ENCODE measurements at regions of chr1 and their contacts with region 1.

Region 1: DNA sequence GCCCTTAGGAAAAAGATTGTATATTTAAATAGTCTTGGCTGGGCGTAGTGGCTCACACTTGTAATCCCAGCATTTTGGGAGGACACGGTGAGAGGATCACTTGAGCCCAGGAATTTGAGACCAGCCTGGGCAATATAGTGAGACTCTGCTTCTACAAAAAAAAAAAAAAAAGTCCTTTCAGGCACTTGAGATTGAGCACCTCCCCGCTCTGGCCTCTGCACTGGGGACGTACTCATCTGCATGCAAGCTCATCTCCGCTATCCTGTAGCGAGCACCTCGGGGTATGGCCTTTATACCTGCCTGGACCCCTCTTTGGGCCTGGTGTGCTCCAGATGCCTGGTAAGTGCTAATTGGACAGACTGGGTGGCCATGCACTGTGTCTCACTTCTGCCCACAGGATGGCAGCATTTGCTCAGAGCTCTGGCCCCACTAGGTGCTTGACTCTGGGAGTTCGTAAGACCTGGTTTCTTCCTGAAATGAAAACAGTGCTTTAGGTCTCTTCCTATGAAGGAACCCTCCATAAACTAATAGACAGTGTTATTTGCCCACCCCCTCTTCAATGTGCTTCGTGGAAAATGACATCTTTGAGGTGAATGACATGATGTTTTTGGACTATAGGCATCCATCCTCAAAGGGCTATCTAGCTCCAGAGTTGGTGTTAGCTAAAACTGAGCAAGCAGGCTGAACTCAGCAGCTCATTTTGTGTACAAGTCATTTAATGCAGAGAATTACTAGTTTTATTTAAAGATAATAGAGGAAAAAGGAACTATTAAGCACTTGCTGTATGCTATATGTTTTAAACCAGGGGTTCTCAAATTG is 61.7 kb upstream of the ADAR start:
- DNase-seq: peak; percentile 88
- H3K4me3 ChIP-seq: no peak overlapping the region
- H3K27ac ChIP-seq: no peak overlapping the region
- H3K4me1 ChIP-seq: peaks cover 0 to 7% (median 0%) of the 10 kb centered on the region in 6 donors
- H3K27me3 ChIP-seq: no peaks in the 10 kb centered on the region
- CTCF ChIP-seq: peak; percentile 64 to 88 (median 77)
- POLR2A ChIP-seq: no peak

Region 2: GRCh38 chr1:154474802-154475201 is 194.9 kb before region 1 on chr1:
- intact Hi-C with region 1: no loop called
- DNase-seq: no peak
- H3K4me3 ChIP-seq: no peak overlapping the region
- H3K27ac ChIP-seq: no peak overlapping the region
- H3K4me1 ChIP-seq: peaks cover 3 to 51% (median 16%) of the 10 kb centered on the region in 6 donors
- H3K27me3 ChIP-seq: no peaks in the 10 kb centered on the region
- CTCF ChIP-seq: no peak
- POLR2A ChIP-seq: no peak

Region 3: DNA sequence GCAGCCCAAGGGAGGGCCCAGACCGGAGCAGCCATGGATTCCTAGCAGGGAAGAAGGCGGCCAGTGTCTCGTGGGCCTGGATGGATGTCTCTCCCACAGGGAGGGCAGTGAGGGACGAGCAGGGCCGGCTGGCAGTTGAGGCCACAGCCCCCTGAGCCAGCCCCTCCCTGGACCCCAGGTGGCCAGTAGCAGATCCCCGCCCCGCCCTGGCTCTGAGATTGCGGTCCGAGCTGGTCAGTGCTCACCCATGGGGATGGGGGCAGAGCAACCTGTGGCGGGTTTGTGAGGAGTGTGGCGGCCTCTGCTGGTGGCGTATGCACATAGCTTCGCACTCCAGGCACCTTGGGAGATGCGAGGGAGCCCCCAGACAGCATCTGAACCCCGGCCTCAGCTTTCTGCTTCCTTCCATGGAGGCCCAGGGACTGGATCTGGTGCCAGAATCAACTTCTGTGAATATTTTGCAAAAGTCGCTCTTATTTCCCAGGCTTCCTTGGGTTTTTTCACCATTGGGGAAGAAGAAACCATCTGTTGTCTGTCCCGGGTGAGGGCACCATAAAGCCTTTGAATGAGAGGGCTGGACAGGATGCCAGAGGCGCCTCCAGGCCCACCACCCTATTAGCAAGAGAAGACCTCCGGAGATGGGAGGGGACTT is 208.8 kb after region 1 on chr1:
- intact Hi-C with region 1: loop called (anchors 5 kb)
- DNase-seq: peak; percentile 91
- H3K4me3 ChIP-seq: no peak overlapping the region
- H3K27ac ChIP-seq: no peak overlapping the region
- H3K4me1 ChIP-seq: peaks cover 0 to 14% (median 6%) of the 10 kb centered on the region in 6 donors
- H3K27me3 ChIP-seq: no peaks in the 10 kb centered on the region
- CTCF ChIP-seq: peak; percentile 46 to 95 (median 91)
- POLR2A ChIP-seq: no peak